Psoas muscle (tissue), 8 donors: ENCODE measurements at regions of chr10 and their contacts with region 1.

Region 1: DNA sequence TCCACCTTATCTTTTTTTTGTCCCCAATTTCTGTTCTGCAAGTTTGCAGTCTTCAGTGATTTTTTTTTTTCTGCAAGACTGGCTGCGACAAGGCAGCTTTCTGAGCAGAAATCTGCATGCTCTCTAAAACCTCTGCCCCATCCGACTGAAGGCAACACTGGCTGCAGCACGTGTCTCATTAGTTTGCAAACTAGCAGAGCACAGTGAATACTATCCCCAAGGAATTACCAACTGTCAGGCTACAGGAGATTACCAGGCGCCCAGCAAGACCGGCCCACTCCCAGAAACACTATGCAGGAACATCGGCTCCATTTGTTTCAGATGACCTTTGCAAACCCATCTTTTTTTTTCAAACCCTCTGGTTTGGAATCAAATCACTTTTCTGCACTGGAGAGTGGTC is 538.8 kb downstream of the SORCS1 start:
- DNase-seq: no peak
- ATAC-seq: no peak
- H3K4me3 ChIP-seq: no peak overlapping the region
- H3K27ac ChIP-seq: no peak overlapping the region
- H3K4me1 ChIP-seq: no peaks in the 10 kb centered on the region
- H3K27me3 ChIP-seq: no peaks in the 10 kb centered on the region
- CTCF ChIP-seq: no peak

Region 2: GRCh38 chr10:104980368-104980767 is 1645.4 kb before region 1 on chr10:
- intact Hi-C with region 1: no loop called
- DNase-seq: no peak
- ATAC-seq: no peak
- H3K4me3 ChIP-seq: no peak overlapping the region
- H3K27ac ChIP-seq: no peak overlapping the region
- H3K4me1 ChIP-seq: no peaks in the 10 kb centered on the region
- H3K27me3 ChIP-seq: no peaks in the 10 kb centered on the region
- CTCF ChIP-seq: no peak

Region 3: GRCh38 chr10:106582291-106582690 is 43.5 kb before region 1 on chr10:
- intact Hi-C with region 1: no loop called
- DNase-seq: no peak
- ATAC-seq: no peak
- H3K4me3 ChIP-seq: no peak overlapping the region
- H3K27ac ChIP-seq: no peak overlapping the region
- H3K4me1 ChIP-seq: no peaks in the 10 kb centered on the region
- H3K27me3 ChIP-seq: no peaks in the 10 kb centered on the region
- CTCF ChIP-seq: no peak

Region 4: DNA sequence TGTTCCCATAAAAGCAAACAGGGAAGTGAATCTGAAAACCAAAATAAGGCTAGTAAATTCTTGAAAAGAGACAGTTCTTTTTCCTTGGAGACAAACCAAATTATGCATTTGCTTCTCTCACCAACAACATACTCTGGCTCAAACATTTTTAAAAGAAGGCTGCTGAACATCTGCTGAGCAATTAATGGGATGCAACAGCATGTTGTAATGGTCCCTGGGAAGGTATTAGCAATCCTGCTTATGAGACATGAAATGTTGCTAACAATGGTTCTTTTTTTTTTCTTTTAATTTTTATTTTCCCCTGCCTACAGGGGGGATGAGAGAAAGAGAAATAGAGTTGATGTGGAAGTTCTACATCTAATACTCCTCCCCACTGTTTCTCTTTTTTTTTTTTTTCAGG is 33.4 kb before region 1 on chr10:
- intact Hi-C with region 1: no loop called
- DNase-seq: no peak
- ATAC-seq: no peak
- H3K4me3 ChIP-seq: no peak overlapping the region
- H3K27ac ChIP-seq: no peak overlapping the region
- H3K4me1 ChIP-seq: no peaks in the 10 kb centered on the region
- H3K27me3 ChIP-seq: peaks cover 0 to 4% (median 0%) of the 10 kb centered on the region in 3 donors
- CTCF ChIP-seq: no peak

Region 5: GRCh38 chr10:106682175-106682574 is 56.4 kb after region 1 on chr10:
- intact Hi-C with region 1: loop called in 1 of 2 experiments (anchors 10 kb)
- DNase-seq: no peak
- ATAC-seq: no peak
- H3K4me3 ChIP-seq: no peak overlapping the region
- H3K27ac ChIP-seq: no peak overlapping the region
- H3K4me1 ChIP-seq: no peaks in the 10 kb centered on the region
- H3K27me3 ChIP-seq: no peaks in the 10 kb centered on the region
- CTCF ChIP-seq: no peak

Region 6: GRCh38 chr10:107011105-107011504 is 385.4 kb after region 1 on chr10:
- intact Hi-C with region 1: no loop called
- DNase-seq: no peak
- ATAC-seq: no peak
- H3K4me3 ChIP-seq: no peak overlapping the region
- H3K27ac ChIP-seq: no peak overlapping the region
- H3K4me1 ChIP-seq: no peaks in the 10 kb centered on the region
- H3K27me3 ChIP-seq: no peaks in the 10 kb centered on the region
- CTCF ChIP-seq: no peak